Esophagus muscularis mucosa (tissue), 4 donors: ENCODE measurements at regions of chr6 and their contacts with region 1.

Region 1: GRCh38 chr6:132768051-132768517 is 10.4 kb upstream of the VNN2 start:
- DNase-seq: no peak
- H3K4me3 ChIP-seq: no peak overlapping the region
- H3K27ac ChIP-seq: no peak overlapping the region
- H3K4me1 ChIP-seq: peaks cover 0 to 8% (median 0%) of the 10 kb centered on the region in 4 donors
- H3K27me3 ChIP-seq: no peaks in the 10 kb centered on the region
- CTCF ChIP-seq: peak; percentile 17 to 30 (median 28)
- EP300 ChIP-seq: no peak
- POLR2A ChIP-seq: no peak

Region 2: DNA sequence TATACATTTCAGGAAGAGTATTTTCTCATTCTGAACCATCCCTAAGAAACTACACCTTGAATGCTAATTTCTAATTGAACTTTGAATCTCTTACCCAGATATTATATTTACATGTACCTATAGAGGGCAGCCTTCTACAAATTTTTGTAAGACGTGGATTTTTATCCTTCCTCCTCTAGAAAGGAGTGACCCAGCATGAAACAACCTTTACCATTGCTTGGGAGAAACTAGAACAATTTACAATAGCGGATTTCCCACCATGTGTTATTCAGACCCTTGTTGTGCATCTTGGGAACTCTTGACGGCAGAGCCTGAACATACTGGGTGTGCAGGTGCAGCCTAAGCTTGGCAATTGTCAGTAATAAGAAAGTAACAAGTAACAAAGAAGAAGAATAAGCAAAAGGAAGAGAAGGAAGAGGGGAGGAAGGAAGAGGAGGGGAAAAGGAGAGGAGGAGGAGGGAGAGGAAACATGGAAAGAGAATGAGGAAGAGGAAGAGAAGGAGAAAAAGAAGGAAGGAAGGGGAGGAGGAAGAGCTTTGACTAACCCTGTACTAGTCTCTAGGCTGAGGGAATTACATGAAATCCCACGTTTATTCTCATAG is 98.3 kb before region 1 on chr6:
- intact Hi-C with region 1: loop called (anchors 10 kb)
- DNase-seq: no peak
- H3K4me3 ChIP-seq: no peak overlapping the region
- H3K27ac ChIP-seq: no peak overlapping the region
- H3K4me1 ChIP-seq: peaks cover 0 to 3% (median 0%) of the 10 kb centered on the region in 4 donors
- H3K27me3 ChIP-seq: no peaks in the 10 kb centered on the region
- CTCF ChIP-seq: peak; percentile 37 to 56 (median 41)
- EP300 ChIP-seq: no peak
- POLR2A ChIP-seq: no peak